PC-9 (cell line): ENCODE measurements at regions of chr1 and their contacts with region 1.

Region 1: DNA sequence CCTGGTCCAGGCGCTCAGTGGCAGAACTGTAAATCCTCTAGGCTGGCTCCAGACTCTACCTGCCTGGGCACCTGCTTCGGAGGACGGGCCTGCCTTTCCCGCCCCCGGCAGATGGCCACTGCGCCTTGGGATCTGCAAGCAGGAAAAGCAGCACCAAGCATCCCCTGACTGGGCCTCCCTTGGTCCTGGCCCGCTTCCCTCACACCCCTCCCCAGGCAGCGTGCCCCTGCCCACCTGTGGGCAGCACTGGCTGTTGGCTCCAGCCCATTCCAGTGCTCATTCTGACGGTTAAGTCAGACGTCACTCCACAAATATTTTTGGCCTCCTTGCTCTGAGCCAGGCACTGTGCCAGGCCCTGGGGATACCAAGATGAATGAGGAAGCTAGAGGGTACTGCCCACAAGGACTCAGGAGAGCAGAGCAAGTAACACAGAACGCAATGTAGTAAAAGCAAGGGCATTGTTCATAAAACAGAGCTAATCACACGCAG is 22.0 kb upstream of the BLACAT1 start:
- DNase-seq: peak; percentile 92 to 97
- H3K4me3 ChIP-seq: no peak overlapping the region
- H3K27ac ChIP-seq: peak overlapping the region; percentile 40; the same call in 1 of the 2 replicates
- H3K4me1 ChIP-seq: peaks cover 16% of the 10 kb centered on the region
- H3K27me3 ChIP-seq: 0 out of 2 replicates have a peak, but pooled peaks cover 2% of the 10 kb centered on the region
- CTCF ChIP-seq: no peak

Region 2: GRCh38 chr1:205440476-205441317 is 37.1 kb before region 1 on chr1:
- CTCF ChIA-PET with region 1: no interaction called
- POLR2A ChIA-PET with region 1: interaction called, 3 read pairs
- intact Hi-C with region 1: loop called (anchors 2 kb)
- DNase-seq: peak in 1 of 2 experiments; percentile 86
- H3K4me3 ChIP-seq: no peak overlapping the region
- H3K27ac ChIP-seq: peak overlapping the region; percentile 85
- H3K4me1 ChIP-seq: peaks cover 46% of the 10 kb centered on the region
- H3K27me3 ChIP-seq: no peaks in the 10 kb centered on the region
- CTCF ChIP-seq: no peak

Region 3: GRCh38 chr1:205729945-205730610 is 252.3 kb after region 1 on chr1:
- CTCF ChIA-PET with region 1: no interaction called
- POLR2A ChIA-PET with region 1: no interaction called
- intact Hi-C with region 1: no loop called
- DNase-seq: no peak
- H3K4me3 ChIP-seq: no peak overlapping the region
- H3K27ac ChIP-seq: no peak overlapping the region
- H3K4me1 ChIP-seq: no peaks in the 10 kb centered on the region; the same call in 1 of the 2 replicates
- H3K27me3 ChIP-seq: no peaks in the 10 kb centered on the region
- CTCF ChIP-seq: no peak

Region 4: DNA sequence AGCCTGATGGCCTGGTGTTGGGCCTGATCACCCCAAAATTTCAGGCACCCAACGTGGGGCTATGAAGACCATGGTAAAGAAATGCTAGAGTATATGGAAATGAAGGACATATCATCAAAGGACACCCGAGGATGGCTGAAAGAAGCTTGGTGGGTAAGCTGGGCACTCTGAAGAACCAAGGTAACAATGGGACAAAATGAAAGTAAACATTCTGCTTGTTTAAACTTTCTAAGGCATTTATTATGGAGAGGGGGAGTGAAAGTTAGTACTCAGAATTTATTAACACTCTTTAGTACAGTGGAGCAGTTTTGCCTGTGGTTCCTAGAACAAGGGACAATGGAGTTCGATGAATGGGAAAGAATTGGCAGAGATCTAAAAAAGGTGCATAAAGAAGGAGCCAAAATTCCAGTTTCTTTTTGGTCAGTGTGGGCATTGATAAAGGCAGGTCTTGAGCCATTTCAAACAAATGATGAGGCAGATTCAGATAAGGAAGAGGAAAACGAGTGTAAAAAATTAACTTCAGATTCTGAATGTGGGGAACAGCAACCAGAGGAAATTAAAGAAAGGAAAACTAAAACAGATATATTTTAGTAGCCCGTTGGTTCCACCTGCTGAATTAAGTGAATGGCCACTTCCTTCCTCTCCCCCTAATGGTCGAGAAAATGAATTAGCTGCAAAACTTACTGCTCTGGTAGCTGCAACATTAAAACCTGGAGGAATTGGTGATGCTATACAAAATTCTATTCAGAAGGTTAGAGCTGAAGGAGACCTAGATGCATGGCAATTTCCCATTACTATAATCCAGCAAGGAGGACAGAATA is 380.5 kb after region 1 on chr1:
- CTCF ChIA-PET with region 1: no interaction called
- POLR2A ChIA-PET with region 1: no interaction called
- intact Hi-C with region 1: no loop called
- DNase-seq: no peak
- H3K4me3 ChIP-seq: no peak overlapping the region
- H3K27ac ChIP-seq: no peak overlapping the region
- H3K4me1 ChIP-seq: no peaks in the 10 kb centered on the region
- H3K27me3 ChIP-seq: no peaks in the 10 kb centered on the region
- CTCF ChIP-seq: no peak